Activated CD4-positive, alpha-beta memory T cell treated with anti-CD3 and anti-CD28 coated beads, Interleukin-2, amount 10 ng/mL, durations not matched to agents 7 days and 5 days (primary cell): ENCODE measurements at regions of chr2 and their contacts with region 1.

Region 1: GRCh38 chr2:231227309-231228162 is 29.1 kb downstream of the ARMC9 start:
- DNase-seq: peak; percentile 54
- H3K4me3 Mint-ChIP-seq: no peak overlapping the region
- H3K27ac Mint-ChIP-seq: no peak overlapping the region
- H3K4me1 Mint-ChIP-seq: no peaks in the 10 kb centered on the region
- H3K27me3 Mint-ChIP-seq: no peaks in the 10 kb centered on the region

Region 2: GRCh38 chr2:231452799-231453508 is 225.4 kb after region 1 on chr2:
- CTCF ChIA-PET with region 1: interaction called, 33 read pairs
- POLR2A ChIA-PET with region 1: interaction called, 5 read pairs
- DNase-seq: no peak
- H3K4me3 Mint-ChIP-seq: no peak overlapping the region
- H3K27ac Mint-ChIP-seq: no peak overlapping the region
- H3K4me1 Mint-ChIP-seq: peaks cover 19% of the 10 kb centered on the region
- H3K27me3 Mint-ChIP-seq: no peaks in the 10 kb centered on the region